CD8-positive, alpha-beta T cell (primary cell): ENCODE measurements at regions of chr4 and their contacts with region 1.

Region 1: DNA sequence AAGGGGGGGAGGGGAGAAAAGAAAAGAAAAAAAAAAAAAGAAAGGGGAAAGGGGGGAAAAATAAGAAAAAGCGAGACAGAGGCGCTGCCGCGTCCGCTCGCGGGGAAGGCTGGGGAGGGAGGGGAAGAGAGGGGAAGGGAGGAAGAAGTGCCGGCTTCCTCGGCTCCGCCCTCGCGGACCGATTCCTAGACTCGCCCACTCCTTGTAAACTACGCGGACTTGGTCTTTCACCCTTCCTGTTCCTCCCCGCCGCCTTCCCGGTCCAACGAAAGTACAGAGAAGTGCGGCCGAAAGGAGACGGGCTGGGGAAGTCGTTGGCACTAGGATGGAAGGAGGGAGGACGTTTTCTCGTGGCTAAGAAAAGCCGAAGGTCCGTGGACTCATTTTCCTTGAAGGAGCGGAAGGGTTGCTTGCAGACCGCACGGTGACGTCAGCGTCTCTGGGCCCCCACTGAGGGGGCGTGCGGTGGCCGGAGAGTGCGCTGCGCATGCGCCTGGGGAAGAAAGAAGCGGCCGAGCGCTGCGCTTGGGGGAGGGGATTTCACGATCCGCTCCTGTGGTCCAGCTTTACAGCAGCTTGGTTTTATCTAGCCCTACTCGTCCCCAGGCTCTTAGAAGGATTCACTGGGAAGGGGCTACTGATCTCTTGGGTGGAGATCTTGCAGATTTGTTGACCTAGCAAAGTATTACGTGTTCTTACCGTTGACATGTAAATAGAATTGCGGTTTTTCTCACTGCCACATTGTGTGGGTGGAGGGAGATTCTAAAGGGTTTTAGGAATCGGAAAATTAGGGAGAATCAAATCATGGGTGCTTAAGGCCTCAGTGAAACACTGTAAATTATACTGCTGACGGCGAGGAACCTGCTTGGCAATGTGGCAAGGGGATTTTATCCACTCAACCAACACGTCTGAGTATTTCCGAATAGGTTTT is at the start of gene CCNI:
- DNase-seq: peak; percentile 85 to 97 (median 92)
- ATAC-seq: peak; percentile 70
- H3K4me3 ChIP-seq: peak within 1 kb of the TSS; percentile 90 to 98
- H3K4me3 Mint-ChIP-seq: no peak within 1 kb of the TSS
- H3K27ac ChIP-seq: peak within 1 kb of the TSS; percentile 99 to 100
- H3K27ac Mint-ChIP-seq: peak within 1 kb of the TSS; percentile 100
- H3K4me1 ChIP-seq: peaks cover 42% of the 10 kb centered on the region
- H3K4me1 Mint-ChIP-seq: peaks cover 46% of the 10 kb centered on the region
- H3K27me3 ChIP-seq: no peaks in the 10 kb centered on the region
- H3K27me3 Mint-ChIP-seq: no peaks in the 10 kb centered on the region
- CTCF ChIP-seq: no peak
- total RNA-seq, gene CCNI: 381 to 403 TPM

Region 2: GRCh38 chr4:75724066-75724866 is 1351.9 kb before region 1 on chr4 and contains the start of gene USO1:
- CTCF ChIA-PET with region 1: no interaction called
- POLR2A ChIA-PET with region 1: no interaction called
- intact Hi-C with region 1: loop called in 1 of 2 experiments (anchors 10 kb)
- DNase-seq: peak; percentile 98 to 100 (median 99)
- ATAC-seq: peak; percentile 92
- H3K4me3 ChIP-seq: peak within 1 kb of the TSS; percentile 58 to 99
- H3K4me3 Mint-ChIP-seq: peak within 1 kb of the TSS; percentile 99
- H3K27ac ChIP-seq: peak within 1 kb of the TSS; percentile 70 to 93
- H3K27ac Mint-ChIP-seq: peak within 1 kb of the TSS; percentile 99
- H3K4me1 ChIP-seq: peaks cover 32% of the 10 kb centered on the region
- H3K4me1 Mint-ChIP-seq: peaks cover 54% of the 10 kb centered on the region
- H3K27me3 ChIP-seq: no peaks in the 10 kb centered on the region
- H3K27me3 Mint-ChIP-seq: no peaks in the 10 kb centered on the region
- CTCF ChIP-seq: peak; percentile 79
- total RNA-seq, gene USO1: 9.8 to 10.2 TPM

Region 3: GRCh38 chr4:76488905-76489790 is 587.0 kb before region 1 on chr4:
- CTCF ChIA-PET with region 1: no interaction called
- POLR2A ChIA-PET with region 1: no interaction called
- intact Hi-C with region 1: no loop called
- DNase-seq: no peak
- ATAC-seq: no peak
- H3K4me3 ChIP-seq: no peak overlapping the region
- H3K4me3 Mint-ChIP-seq: no peak overlapping the region
- H3K27ac ChIP-seq: no peak overlapping the region
- H3K27ac Mint-ChIP-seq: no peak overlapping the region
- H3K4me1 ChIP-seq: no peaks in the 10 kb centered on the region
- H3K4me1 Mint-ChIP-seq: no peaks in the 10 kb centered on the region
- H3K27me3 ChIP-seq: no peaks in the 10 kb centered on the region
- H3K27me3 Mint-ChIP-seq: no peaks in the 10 kb centered on the region
- CTCF ChIP-seq: no peak

Region 4: GRCh38 chr4:76949276-76950051 is 126.7 kb before region 1 on chr4 and contains the start of gene SEPTIN11:
- CTCF ChIA-PET with region 1: no interaction called
- POLR2A ChIA-PET with region 1: no interaction called
- intact Hi-C with region 1: loop called (anchors 1 to 2 kb)
- DNase-seq: peak; percentile 74 to 94 (median 84)
- ATAC-seq: peak; percentile 74
- H3K4me3 ChIP-seq: peak within 1 kb of the TSS; percentile 88 to 89
- H3K4me3 Mint-ChIP-seq: peak within 1 kb of the TSS; percentile 92
- H3K27ac ChIP-seq: peak within 1 kb of the TSS; percentile 56 to 66
- H3K27ac Mint-ChIP-seq: peak within 1 kb of the TSS; percentile 77
- H3K4me1 ChIP-seq: peaks cover 15% of the 10 kb centered on the region
- H3K4me1 Mint-ChIP-seq: peaks cover 24% of the 10 kb centered on the region
- H3K27me3 ChIP-seq: no peaks in the 10 kb centered on the region
- H3K27me3 Mint-ChIP-seq: no peaks in the 10 kb centered on the region
- CTCF ChIP-seq: no peak
- total RNA-seq, gene SEPTIN11: 12.3 to 13.1 TPM

Region 5: GRCh38 chr4:76982321-76983190 is 93.6 kb before region 1 on chr4:
- CTCF ChIA-PET with region 1: no interaction called
- POLR2A ChIA-PET with region 1: no interaction called
- intact Hi-C with region 1: no loop called
- DNase-seq: peak in 2 of 9 experiments; percentile 19 to 44
- ATAC-seq: no peak
- H3K4me3 ChIP-seq: no peak overlapping the region
- H3K4me3 Mint-ChIP-seq: peak overlapping the region; percentile 40
- H3K27ac ChIP-seq: no peak overlapping the region
- H3K27ac Mint-ChIP-seq: peak overlapping the region; percentile 9
- H3K4me1 ChIP-seq: peaks cover 47% of the 10 kb centered on the region
- H3K4me1 Mint-ChIP-seq: peaks cover 84% of the 10 kb centered on the region
- H3K27me3 ChIP-seq: no peaks in the 10 kb centered on the region
- H3K27me3 Mint-ChIP-seq: no peaks in the 10 kb centered on the region
- CTCF ChIP-seq: no peak

Region 6: GRCh38 chr4:76993787-76994641 is 82.1 kb before region 1 on chr4:
- CTCF ChIA-PET with region 1: no interaction called
- POLR2A ChIA-PET with region 1: no interaction called
- intact Hi-C with region 1: loop called (anchors 1 to 2 kb)
- DNase-seq: peak; percentile 10 to 81 (median 54)
- ATAC-seq: peak; percentile 65
- H3K4me3 ChIP-seq: peak overlapping the region in 1 of 2 experiments; percentile 55
- H3K4me3 Mint-ChIP-seq: peak overlapping the region; percentile 75
- H3K27ac ChIP-seq: peak overlapping the region; percentile 2 to 39
- H3K27ac Mint-ChIP-seq: peak overlapping the region; percentile 89
- H3K4me1 ChIP-seq: peaks cover 57% of the 10 kb centered on the region
- H3K4me1 Mint-ChIP-seq: peaks cover 61% of the 10 kb centered on the region
- H3K27me3 ChIP-seq: no peaks in the 10 kb centered on the region
- H3K27me3 Mint-ChIP-seq: no peaks in the 10 kb centered on the region
- CTCF ChIP-seq: no peak

Region 7: GRCh38 chr4:77095101-77095821 is 19.1 kb after region 1 on chr4:
- CTCF ChIA-PET with region 1: interaction called, 13 read pairs
- POLR2A ChIA-PET with region 1: interaction called, 4 read pairs
- intact Hi-C with region 1: loop called in 1 of 2 experiments (anchors 2 kb)
- DNase-seq: peak; percentile 48 to 79 (median 75)
- ATAC-seq: peak; percentile 99
- H3K4me3 ChIP-seq: no peak overlapping the region
- H3K4me3 Mint-ChIP-seq: no peak overlapping the region
- H3K27ac ChIP-seq: no peak overlapping the region
- H3K27ac Mint-ChIP-seq: no peak overlapping the region
- H3K4me1 ChIP-seq: peaks cover 1% of the 10 kb centered on the region
- H3K4me1 Mint-ChIP-seq: peaks cover 14% of the 10 kb centered on the region
- H3K27me3 ChIP-seq: peaks cover 0 to 2% of the 10 kb centered on the region in 2 experiments
- H3K27me3 Mint-ChIP-seq: no peaks in the 10 kb centered on the region
- CTCF ChIP-seq: peak; percentile 83

Region 8: DNA sequence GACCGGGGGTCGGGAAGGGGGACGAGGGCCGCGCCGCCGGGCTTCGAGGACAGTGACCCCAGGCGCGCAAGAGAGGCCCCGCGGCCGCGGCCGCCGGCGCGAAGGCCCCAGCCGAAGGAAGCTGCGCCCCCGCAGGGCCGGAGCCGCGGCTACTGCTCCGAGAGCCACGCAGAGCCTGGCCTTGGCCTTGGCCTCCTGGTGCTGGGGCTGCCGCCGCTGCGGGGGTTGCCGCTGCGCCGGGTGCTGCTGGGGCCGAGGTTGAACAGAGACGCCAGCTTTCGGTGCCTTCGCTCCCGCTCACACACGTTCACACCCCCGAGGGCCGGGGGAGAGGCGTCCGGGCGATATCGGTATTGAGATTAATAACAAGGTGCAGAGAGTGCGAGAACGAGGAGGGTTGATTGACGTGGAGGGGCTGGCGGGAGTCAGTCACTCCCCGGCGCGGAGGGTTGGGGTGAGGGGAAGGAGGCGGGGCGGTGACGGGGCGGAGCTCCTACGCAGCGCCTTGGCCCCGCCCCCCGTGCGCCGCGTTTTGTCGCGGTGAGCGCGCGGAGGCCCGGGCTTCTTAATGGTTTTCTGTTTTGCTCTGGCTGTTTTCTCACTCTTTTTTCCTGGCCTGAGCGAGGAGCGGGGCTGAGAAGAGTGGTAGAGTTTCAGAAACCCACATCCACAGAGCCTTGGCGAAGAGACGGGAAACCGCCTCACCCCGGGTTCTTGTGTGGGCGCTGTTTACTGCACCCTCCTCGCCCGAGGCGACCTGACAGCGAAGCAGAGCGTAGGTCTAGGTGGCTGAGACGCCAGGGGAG is 743.9 kb after region 1 on chr4:
- CTCF ChIA-PET with region 1: no interaction called
- POLR2A ChIA-PET with region 1: interaction called, 3 read pairs
- intact Hi-C with region 1: loop called in 1 of 2 experiments (anchors 2 kb)
- DNase-seq: peak; percentile 93 to 98 (median 96)
- ATAC-seq: peak; percentile 75
- H3K4me3 ChIP-seq: peak overlapping the region; percentile 64 to 69
- H3K4me3 Mint-ChIP-seq: peak overlapping the region; percentile 99
- H3K27ac ChIP-seq: peak overlapping the region; percentile 96 to 98
- H3K27ac Mint-ChIP-seq: peak overlapping the region; percentile 100
- H3K4me1 ChIP-seq: peaks cover 44% of the 10 kb centered on the region
- H3K4me1 Mint-ChIP-seq: peaks cover 60% of the 10 kb centered on the region
- H3K27me3 ChIP-seq: no peaks in the 10 kb centered on the region
- H3K27me3 Mint-ChIP-seq: no peaks in the 10 kb centered on the region
- CTCF ChIP-seq: no peak